ENCODE measurements at regions of chr1 and their contacts with region 1.

Region 1: DNA sequence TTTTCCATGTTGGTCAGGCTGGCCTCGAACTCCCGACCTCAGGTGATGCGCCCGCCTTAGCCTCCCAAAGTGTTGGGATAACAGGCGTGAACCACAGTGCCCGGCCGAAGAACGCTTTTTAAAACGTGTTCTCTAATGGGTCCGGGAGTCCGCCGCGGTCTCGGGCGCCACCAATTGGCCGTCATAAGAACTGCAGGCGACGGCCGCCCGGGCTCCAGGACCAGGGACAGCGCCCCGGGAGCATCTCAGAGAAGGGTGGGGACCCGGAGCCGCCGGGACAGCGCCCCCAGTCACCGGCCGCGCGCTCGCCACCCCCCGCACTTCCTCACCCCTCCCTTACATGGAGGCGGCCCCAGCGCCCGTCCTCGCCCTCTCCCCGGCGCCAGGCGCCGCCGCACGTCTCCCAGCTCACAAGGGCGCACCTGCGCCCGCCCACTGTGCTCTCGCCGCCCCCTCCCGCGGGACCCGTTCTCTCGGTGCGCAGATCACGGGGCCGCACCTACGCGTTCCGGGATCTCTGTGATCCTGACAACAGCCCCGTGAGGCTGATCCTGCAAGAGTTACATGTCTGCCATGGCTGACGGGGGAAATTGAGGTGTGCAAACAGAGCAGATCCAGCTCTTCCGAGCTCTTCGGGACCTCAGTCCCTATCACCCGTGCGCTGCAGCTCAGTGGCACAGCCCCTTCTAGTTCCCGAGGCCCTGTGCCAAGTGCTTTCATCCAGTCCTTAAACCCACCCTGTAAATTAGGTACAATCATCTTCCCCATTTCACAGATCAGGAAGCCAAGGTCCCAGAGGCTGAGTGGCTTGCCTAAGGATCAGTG is 9.8 kb downstream of the RAP1GAP start:
- DNase-seq: no peak
- H3K4me3 ChIP-seq: no peak overlapping the region
- H3K27me3 ChIP-seq: peaks cover 12% of the 10 kb centered on the region
- CTCF ChIP-seq: peak; percentile 93

Region 2: DNA sequence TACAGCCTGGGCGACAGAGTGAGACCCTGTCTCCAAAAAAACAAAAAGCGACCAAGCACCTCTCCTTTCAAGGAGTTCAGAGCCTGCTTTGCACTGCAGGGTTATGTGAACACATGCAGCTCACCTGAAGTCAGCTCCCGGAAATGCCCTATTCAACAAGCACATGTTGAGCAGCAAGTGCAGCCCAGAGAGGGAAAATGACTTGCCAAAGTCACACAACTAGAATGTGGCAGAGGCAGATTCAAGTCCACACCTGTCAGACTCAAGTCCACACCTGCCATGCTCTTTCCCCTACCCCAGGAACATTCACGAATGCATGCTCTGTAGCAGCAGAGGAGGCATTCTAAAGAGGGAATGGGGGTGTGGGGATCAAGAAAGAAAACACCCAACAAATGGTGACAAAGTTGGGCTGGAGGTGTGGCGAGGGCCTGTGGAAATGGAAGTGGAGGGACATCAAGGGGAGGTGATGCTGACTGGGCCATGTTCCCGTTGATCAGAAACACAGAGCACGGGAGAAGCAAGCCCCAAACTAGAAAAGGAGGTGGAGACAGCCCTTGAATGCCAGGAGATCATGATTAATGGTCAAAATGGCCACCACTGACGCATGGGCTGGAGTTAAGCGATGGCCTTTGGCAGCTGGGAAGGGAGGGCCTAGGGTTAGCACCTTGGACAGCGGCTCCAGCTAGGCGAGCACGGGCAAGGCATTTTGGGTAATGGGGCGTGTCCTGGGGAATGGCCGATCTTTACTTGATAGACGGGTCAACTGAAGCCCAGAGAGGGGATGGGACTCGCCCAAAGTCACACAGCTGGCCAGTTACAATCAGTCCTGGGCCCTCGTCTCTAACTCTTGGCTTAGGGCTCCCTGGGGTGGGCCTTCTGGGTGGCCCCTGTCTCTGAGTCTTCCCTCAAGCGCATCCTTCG is 11.6 kb before region 1 on chr1:
- CTCF ChIA-PET with region 1: interaction called, 17 read pairs
- POLR2A ChIA-PET with region 1: no interaction called
- DNase-seq: no peak
- H3K4me3 ChIP-seq: no peak overlapping the region
- H3K27me3 ChIP-seq: peaks cover 17% of the 10 kb centered on the region
- CTCF ChIP-seq: no peak

Region 3: DNA sequence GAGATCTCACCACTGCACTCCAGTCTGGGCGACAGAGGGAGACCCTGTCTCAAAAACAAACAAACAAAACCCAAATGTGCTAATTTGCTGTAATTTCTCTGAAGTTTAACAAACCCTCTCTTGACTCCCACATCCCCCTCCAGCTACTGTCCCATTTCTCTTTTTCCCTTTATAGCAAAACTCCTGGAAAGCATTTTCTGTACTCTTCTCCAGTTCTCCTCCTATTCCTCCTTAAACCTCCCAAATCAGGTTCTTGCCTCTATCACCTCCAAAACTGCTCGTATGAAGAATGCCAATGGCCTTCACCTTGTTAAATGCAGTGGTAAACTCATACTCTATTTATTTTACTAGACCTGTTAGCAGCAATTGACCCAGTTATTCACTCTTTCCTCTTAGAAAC is 127.3 kb after region 1 on chr1:
- CTCF ChIA-PET with region 1: no interaction called
- POLR2A ChIA-PET with region 1: no interaction called
- DNase-seq: no peak
- H3K4me3 ChIP-seq: no peak overlapping the region
- H3K27me3 ChIP-seq: no peaks in the 10 kb centered on the region
- CTCF ChIP-seq: no peak